Cardiac septum (tissue), 1 donor: ENCODE measurements at regions of chr7 and their contacts with region 1.

Region 1: DNA sequence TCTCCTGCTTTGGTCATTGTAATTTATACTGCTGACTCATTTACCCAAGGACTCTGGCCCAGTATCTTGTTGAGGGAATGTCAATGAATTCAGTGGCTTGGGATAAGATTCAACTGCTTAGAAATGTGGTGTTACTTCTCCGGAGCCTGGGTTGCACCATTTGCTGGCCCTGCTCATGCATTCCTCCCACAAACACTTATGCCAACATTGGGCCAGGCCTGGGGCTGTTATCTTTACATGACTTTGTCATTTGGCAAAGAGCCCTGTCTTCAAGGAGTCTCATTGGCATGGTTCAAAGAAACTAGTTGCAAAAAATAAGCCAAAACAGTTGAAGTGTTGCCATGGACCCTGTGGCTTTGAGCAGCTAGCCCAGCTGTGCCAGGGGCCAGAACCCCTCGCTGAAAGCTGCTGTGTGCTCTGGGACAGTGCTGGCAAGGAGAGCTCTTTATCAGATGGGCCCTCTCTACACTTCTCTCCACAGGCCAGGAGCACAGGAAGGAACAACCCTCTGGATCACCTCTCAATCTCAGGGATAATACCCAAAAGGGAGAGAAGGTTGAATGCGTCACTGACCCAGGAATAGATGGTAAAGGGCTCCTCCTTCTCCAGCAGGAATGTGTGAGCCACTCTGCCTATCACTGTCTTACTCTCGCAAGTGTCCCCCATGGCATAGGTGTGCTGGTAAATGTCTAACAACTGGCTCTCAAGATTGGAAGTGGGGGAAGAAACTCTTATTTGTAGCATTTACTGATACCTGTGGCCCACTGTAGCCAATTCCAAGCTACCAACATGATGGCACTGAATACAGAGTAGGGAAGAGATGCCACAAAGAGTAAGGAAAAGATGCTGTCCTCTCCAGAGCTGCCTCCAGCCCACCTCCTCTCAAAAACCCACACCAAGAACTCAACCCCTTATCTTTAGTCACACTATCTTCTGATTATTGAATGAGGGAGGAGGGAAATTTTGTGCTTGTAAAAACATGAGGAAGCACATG is 23.5 kb upstream of the PDE1C start:
- DNase-seq: peak; percentile 75

Region 2: DNA sequence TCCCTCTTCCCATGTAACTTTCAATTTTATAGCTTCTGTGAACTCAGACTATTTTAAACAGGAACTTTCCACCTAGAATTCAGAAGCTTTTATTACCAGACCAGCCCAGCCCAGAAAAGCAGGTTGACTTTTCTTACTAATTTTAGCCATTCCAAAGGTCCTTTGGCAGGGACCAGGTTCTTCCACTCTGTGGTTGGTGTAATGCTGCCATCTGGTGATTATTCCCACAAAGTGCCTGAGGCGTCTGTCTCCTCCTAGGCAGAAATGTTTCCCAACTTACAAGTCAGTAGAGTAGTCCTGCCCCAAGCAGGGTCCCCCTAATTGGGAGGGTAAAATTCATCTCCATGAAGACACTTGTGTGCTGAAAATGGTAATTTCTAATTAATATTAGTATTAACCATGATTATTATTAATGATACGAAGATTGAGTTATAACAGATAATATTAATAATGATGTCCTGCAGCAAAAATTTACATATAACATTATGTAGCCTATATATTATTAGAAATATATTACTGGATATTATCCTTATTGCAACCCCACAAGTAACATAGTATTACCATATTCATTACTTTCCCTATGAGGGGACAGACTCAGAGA is 459.7 kb before region 1 on chr7:
- intact Hi-C with region 1: no loop called
- DNase-seq: no peak

Region 3: DNA sequence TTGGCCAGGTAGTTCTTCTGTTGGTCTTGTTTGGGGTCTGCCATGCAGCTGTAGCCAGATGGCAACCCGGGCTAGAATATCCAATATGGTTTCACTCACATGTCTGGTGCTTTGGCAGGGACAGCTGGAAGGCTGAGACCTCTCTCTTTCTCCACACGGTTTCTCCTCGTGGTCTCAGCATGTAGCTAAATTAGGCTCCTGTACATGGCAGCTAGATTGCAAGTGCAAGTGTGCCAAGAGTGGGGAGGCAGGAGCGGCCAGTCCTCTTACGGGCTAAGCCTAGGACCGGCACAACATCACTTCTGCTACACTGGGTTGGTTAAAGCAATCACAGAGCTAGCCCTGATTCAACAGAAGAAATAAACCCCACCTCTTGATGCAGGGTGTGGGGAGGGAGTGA is 14.2 kb before region 1 on chr7:
- intact Hi-C with region 1: loop called (anchors 2 kb)
- DNase-seq: peak; percentile 85

Region 4: DNA sequence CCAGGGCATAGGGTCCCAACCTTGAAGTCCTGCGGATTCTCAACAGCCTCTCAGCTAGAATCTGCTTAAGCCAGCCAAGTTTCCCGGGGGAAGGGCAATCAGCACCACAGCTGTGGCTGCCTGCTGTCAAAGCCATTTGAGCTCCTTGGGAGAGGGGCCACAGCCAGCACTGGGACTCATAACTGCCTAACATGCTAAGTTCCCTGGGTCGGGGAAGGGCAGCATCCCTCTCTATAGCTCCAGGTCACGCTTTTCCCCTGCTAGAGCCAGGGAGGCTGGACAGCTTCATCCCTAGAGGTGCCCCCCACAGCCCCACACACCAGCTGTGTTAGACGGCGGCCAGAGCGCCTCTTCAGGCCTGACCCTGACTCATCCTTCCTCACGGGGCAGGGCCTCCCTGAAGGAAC is 26.1 kb after region 1 on chr7:
- intact Hi-C with region 1: no loop called
- DNase-seq: no peak

Region 5: DNA sequence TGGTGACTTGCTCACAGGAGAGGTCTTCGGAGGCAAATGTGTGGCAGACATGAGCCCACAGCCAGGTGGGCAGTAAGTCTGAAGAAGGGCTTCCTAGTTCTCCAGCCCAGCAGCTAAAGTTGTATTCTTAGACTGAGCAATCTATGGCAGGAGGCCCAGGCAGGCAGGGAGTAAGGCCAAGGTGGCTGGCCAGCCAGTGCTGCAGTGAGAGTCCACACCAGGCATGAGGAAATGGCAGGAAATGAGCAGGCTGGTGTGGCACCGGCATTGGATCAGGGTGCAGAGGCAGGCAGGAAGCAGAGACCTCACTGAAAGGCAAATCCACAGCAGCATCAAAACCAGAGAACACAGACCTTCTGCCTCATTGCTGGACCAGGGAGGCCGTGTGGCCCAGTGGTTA is 61.1 kb after region 1 on chr7:
- intact Hi-C with region 1: loop called (anchors 5 kb)
- DNase-seq: peak; percentile 86